ENCODE measurements at regions of chr9 and their contacts with region 1.

Region 1: GRCh38 chr9:130834371-130835311 is at the start of gene ABL1:
- DNase-seq: peak; percentile 80 to 88 (median 82)
- ATAC-seq: peak; percentile 69 to 92 (median 85)
- H3K4me3 ChIP-seq: peak within 1 kb of the TSS; percentile 38 to 92 (median 70)
- H3K27ac ChIP-seq: peak within 1 kb of the TSS; percentile 80 to 97 (median 94)
- H3K4me1 ChIP-seq: peaks cover 8 to 76% (median 57%) of the 10 kb centered on the region in 12 donors
- H3K27me3 ChIP-seq: no peaks in the 10 kb centered on the region
- CTCF ChIP-seq: peak in 1 of 12 donors; percentile 17
- POLR2A ChIP-seq: peak in 1 of 2 donors; percentile 14
- total RNA-seq, gene ABL1: 27.2 to 49.8 (median 34.1) TPM

Region 2: DNA sequence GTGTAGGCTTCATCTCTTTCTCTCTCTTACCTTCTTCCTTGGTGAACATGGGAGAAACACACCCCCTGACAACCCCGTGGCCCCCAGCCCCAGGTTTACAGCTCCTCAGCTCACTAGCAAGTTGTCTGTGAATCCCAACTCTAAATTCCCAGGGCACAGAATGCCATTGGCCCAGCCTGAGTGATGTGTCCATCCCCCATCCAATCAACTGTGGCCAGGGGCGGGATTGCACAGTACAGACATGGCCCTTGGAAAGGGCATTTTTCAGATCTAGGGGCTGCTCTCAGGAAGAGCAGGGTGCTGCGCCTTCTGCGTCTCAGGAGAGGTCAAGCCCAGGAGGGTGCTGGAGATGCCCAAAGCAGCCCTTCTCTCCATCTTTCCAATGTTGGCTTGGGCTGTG is 438.1 kb before region 1 on chr9:
- intact Hi-C with region 1: no loop called
- DNase-seq: no peak
- ATAC-seq: no peak
- H3K4me3 ChIP-seq: no peak overlapping the region
- H3K27ac ChIP-seq: no peak overlapping the region
- H3K4me1 ChIP-seq: no peaks in the 10 kb centered on the region
- H3K27me3 ChIP-seq: no peaks in the 10 kb centered on the region
- CTCF ChIP-seq: no peak
- POLR2A ChIP-seq: no peak

Region 3: DNA sequence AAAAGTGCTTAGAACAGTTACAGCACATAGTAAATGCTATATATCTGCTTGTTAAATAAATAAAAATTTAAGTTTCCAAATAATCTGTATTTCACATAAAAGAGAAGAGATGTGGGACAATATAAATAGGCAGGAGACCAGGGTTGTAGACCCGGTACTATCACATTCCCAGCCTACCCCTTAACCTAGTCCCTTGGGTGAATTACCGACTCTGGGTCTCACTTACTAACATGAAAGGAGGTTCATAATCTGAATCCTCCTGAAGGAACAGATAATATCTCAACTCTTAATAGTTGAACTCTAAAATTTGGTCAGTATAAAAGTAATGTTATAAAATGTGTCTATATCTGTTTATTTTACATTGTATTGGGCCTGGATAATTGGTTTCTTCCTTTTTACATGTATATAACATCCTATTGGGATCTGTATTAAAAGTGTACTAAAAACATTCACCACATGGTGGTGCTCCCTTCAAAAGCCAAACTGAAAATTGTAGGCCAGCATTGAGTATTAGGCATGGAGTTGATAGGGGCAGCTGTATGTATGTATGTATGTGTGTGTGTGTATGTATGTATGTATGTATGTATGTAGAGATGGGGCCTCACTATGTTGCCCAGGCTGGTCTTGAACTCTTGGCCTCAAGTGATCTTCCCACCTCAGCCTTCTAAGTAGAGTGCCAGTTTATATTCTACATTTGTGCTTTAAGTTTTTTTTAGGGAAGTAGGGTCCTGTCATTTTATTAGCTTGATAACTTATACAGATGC is 63.8 kb before region 1 on chr9:
- intact Hi-C with region 1: no loop called
- DNase-seq: no peak
- ATAC-seq: peak; percentile 38 to 77 (median 76)
- H3K4me3 ChIP-seq: no peak overlapping the region
- H3K27ac ChIP-seq: no peak overlapping the region
- H3K4me1 ChIP-seq: peaks cover 0 to 36% (median 20%) of the 10 kb centered on the region in 12 donors
- H3K27me3 ChIP-seq: no peaks in the 10 kb centered on the region
- CTCF ChIP-seq: peak; percentile 49 to 80 (median 68)
- POLR2A ChIP-seq: peak in 1 of 2 donors; percentile 25

Region 4: DNA sequence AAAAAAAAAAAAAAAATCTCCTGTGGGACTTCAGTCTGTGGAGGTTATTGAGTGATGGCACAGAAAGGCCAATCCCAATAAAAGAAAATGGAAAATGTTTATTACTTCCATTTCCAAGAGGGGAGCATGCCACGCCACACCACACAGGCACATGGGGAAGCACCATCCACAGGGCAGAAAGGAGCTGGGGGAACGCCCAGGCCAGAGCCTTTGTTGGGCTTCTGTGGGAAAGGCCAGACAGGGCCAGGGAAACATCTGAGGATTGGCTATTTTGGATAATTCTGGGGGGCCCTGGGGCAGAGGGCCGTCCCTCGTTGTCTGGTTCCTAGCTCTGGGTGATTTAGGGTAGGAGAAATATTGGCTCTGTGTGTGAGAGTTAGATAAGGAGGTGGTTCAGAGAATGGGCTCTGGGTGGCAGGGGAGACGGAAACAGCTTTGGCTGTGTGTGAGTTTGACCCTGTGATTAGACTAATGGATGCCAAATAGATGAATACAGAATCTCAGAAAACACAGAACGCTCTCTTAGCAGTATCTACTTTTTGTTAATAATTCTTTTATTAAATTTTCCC is 48.6 kb before region 1 on chr9:
- intact Hi-C with region 1: loop called in 6 of 10 experiments (anchors 2 to 10 kb)
- DNase-seq: no peak
- ATAC-seq: peak; percentile 29 to 33 (median 31)
- H3K4me3 ChIP-seq: no peak overlapping the region
- H3K27ac ChIP-seq: peak overlapping the region in 6 of 12 donors; percentile 31 to 72 (median 55)
- H3K4me1 ChIP-seq: peaks cover 3 to 58% (median 32%) of the 10 kb centered on the region in 12 donors
- H3K27me3 ChIP-seq: no peaks in the 10 kb centered on the region
- CTCF ChIP-seq: peak in 1 of 12 donors; percentile 3
- POLR2A ChIP-seq: no peak

Region 5: DNA sequence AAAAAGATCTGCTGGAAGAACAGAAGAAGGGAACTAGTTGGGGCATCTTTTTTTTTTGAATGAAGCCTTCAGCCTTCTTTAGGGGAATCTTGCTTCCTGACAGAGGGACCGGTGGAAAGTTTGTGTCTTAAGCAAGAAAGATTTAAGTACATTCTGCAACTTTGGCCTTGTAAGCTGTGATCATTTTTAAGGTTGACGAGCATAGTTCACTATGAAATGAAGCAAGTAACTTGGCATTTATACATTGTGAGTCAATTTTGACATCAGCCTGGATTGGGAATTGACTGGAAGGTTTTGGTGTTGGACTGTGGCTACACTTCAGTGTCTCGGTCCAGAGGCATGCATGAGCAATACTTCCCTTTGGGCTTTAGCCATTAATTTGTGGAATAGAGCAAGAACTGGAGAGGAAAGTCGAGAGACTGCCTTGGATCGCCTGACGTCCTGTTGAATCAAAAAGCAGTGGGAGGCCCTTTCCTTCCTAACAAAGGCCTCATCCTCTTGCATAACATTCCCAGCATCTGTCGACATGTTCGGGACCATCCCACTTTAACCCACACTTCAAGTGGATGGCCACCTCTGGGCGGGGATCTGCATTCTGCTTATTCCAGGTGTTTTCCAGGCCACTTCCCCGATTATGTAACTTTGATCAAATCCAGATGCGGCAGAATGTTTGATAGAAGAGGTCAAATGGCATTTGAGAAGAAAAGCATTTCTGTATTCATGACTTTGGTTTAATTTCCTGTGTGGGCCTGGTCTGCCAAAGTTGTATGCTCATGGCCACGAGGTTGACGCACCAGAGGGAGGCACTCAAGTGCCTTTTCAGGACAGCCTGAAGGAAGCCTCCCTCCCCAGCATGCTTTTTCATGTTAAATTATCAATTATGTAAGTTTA is 12.9 kb after region 1 on chr9:
- intact Hi-C with region 1: loop called in 1 of 10 experiments (anchors 1 kb)
- DNase-seq: peak; percentile 62 to 85 (median 74)
- ATAC-seq: peak; percentile 79 to 92 (median 88)
- H3K4me3 ChIP-seq: peak overlapping the region in 2 of 12 donors; percentile 25 to 32
- H3K27ac ChIP-seq: peak overlapping the region; percentile 40 to 96 (median 88)
- H3K4me1 ChIP-seq: peaks cover 13 to 82% (median 63%) of the 10 kb centered on the region in 12 donors
- H3K27me3 ChIP-seq: no peaks in the 10 kb centered on the region
- CTCF ChIP-seq: peak in 5 of 12 donors; percentile 10 to 35 (median 31)
- POLR2A ChIP-seq: no peak